Esophagus muscularis mucosa (tissue), 4 donors: ENCODE measurements at regions of chr10 and their contacts with region 1.

Region 1: DNA sequence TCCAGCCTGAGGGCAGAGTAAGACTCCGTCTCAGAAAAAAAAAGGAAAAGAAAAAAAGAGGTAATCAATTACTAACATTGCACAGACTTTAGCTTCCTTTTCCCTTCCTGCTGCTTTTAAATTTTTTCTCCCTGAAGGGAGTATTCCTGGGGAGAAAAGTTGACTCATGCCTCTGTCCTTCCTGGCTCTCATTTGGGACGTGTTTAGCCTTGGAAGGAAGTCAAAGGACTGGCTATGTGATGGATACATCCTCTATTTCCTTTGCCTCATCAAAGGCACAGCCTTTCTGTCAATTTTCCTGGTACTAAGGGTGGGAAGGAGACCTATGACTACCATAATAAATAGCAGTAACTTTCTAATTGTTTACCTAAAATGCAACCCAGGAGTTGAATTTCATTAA is 77.6 kb downstream of the ITGA8 start:
- DNase-seq: no peak
- H3K4me3 ChIP-seq: no peak overlapping the region
- H3K27ac ChIP-seq: no peak overlapping the region
- H3K4me1 ChIP-seq: peaks cover 0 to 11% (median 8%) of the 10 kb centered on the region in 4 donors
- H3K27me3 ChIP-seq: no peaks in the 10 kb centered on the region
- CTCF ChIP-seq: no peak
- EP300 ChIP-seq: no peak
- POLR2A ChIP-seq: no peak

Region 2: GRCh38 chr10:15824498-15824897 is 182.4 kb after region 1 on chr10:
- intact Hi-C with region 1: loop called (anchors 10 kb)
- DNase-seq: no peak
- H3K4me3 ChIP-seq: no peak overlapping the region
- H3K27ac ChIP-seq: no peak overlapping the region
- H3K4me1 ChIP-seq: peaks cover 0 to 3% (median under 1%) of the 10 kb centered on the region in 4 donors
- H3K27me3 ChIP-seq: no peaks in the 10 kb centered on the region
- CTCF ChIP-seq: peak; percentile 54 to 67 (median 60)
- EP300 ChIP-seq: no peak
- POLR2A ChIP-seq: no peak